ENCODE measurements at regions of chr1 and their contacts with region 1.

Region 1: DNA sequence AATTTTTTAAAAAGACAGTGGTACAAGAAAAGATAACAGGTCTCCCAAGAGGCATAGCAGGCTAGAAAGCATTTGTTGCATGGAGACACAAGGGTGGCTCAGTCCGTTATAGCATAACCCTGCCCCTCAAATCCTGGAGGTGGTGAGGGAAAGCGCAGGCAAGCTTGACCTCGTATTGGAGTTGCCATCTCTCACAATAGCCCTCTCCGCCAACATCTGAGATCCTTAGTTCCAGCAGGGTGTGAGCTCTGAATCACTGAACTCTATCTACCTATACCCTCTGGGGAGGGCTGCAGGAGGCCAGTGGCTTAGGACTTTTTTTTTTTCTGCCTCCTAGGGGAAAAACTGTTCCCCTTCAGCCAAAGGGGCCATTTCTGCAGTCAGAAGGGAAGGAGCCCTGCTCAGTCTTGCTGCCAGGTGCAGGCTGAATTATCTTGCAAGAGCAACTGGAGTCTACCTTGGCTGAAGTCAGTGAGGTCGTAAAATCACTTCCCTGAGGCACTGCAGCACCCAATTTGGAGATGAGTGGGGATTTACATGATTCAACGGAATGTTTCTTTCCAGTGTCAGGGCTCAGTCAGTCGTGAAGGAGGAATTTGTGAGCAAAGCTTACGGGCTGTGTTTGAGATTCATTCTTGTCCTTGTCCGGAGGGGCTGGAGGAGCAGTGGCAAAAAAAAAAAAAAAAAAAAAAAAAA is 17.2 kb upstream of the C8A start:
- DNase-seq: no peak
- H3K4me3 ChIP-seq: no peak overlapping the region
- H3K27ac ChIP-seq: no peak overlapping the region
- H3K4me1 ChIP-seq: no peaks in the 10 kb centered on the region
- H3K27me3 ChIP-seq: no peaks in the 10 kb centered on the region
- CTCF ChIP-seq: no peak

Region 2: GRCh38 chr1:58047265-58047858 is 1210.0 kb after region 1 on chr1:
- intact Hi-C with region 1: loop called (anchors 5 kb)
- DNase-seq: no peak
- H3K4me3 ChIP-seq: no peak overlapping the region
- H3K27ac ChIP-seq: no peak overlapping the region
- H3K4me1 ChIP-seq: no peaks in the 10 kb centered on the region
- H3K27me3 ChIP-seq: no peaks in the 10 kb centered on the region
- CTCF ChIP-seq: peak; percentile 70

Measured in colonic mucosa (tissue), 4 donors.